ENCODE measurements at regions of chr11 and their contacts with region 1.

Region 1: GRCh38 chr11:126211235-126212088 is at the starts of genes FAM118B and RPUSD4:
- DNase-seq: peak; percentile 96 to 99 (median 98)
- H3K4me3 ChIP-seq: peak within 1 kb of the TSS; percentile 100
- H3K4me3 Mint-ChIP-seq: peak within 1 kb of the TSS; percentile 93 to 99 (median 98)
- H3K27ac ChIP-seq: peak within 1 kb of the TSS; percentile 77
- H3K27ac Mint-ChIP-seq: peak within 1 kb of the TSS; percentile 66 to 99 (median 96)
- H3K4me1 ChIP-seq: peaks cover 22% of the 10 kb centered on the region
- H3K4me1 Mint-ChIP-seq: peaks cover 30 to 53% (median 49%) of the 10 kb centered on the region in 3 donors
- H3K27me3 ChIP-seq: no peaks in the 10 kb centered on the region
- H3K27me3 Mint-ChIP-seq: no peaks in the 10 kb centered on the region
- total RNA-seq, gene FAM118B: 17.9 to 19.0 TPM
- total RNA-seq, gene RPUSD4: 47.3 to 48.8 TPM

Region 2: GRCh38 chr11:126246636-126247035 is 35.2 kb after region 1 on chr11:
- CTCF ChIA-PET with region 1: no interaction called
- POLR2A ChIA-PET with region 1: no interaction called
- DNase-seq: no peak
- H3K4me3 ChIP-seq: no peak overlapping the region
- H3K4me3 Mint-ChIP-seq: no peak overlapping the region
- H3K27ac ChIP-seq: no peak overlapping the region
- H3K27ac Mint-ChIP-seq: no peak overlapping the region
- H3K4me1 ChIP-seq: no peaks in the 10 kb centered on the region
- H3K4me1 Mint-ChIP-seq: no peaks in the 10 kb centered on the region
- H3K27me3 ChIP-seq: no peaks in the 10 kb centered on the region
- H3K27me3 Mint-ChIP-seq: no peaks in the 10 kb centered on the region

Region 3: GRCh38 chr11:126268708-126269579 is 57.5 kb after region 1 on chr11 and contains the starts of genes FOXRED1 and SRPRA:
- CTCF ChIA-PET with region 1: no interaction called
- POLR2A ChIA-PET with region 1: interaction called, 13 read pairs
- DNase-seq: peak; percentile 100
- H3K4me3 ChIP-seq: peak within 1 kb of the TSS; percentile 99
- H3K4me3 Mint-ChIP-seq: peak within 1 kb of the TSS; percentile 85 to 98 (median 96)
- H3K27ac ChIP-seq: peak within 1 kb of the TSS; percentile 97
- H3K27ac Mint-ChIP-seq: peak within 1 kb of the TSS; percentile 92 to 100 (median 98)
- H3K4me1 ChIP-seq: peaks cover 23% of the 10 kb centered on the region
- H3K4me1 Mint-ChIP-seq: peaks cover 39 to 52% (median 48%) of the 10 kb centered on the region in 3 donors
- H3K27me3 ChIP-seq: no peaks in the 10 kb centered on the region
- H3K27me3 Mint-ChIP-seq: no peaks in the 10 kb centered on the region
- total RNA-seq, gene FOXRED1: 40.3 to 42.4 TPM
- total RNA-seq, gene SRPRA: 157 TPM